Activated CD8-positive, alpha-beta memory T cell treated with anti-CD3 and anti-CD28 coated beads, Interleukin-2, amount 10 ng/mL, durations not matched to agents 7 days and 5 days (primary cell): ENCODE measurements at regions of chr14 and their contacts with region 1.

Region 1: DNA sequence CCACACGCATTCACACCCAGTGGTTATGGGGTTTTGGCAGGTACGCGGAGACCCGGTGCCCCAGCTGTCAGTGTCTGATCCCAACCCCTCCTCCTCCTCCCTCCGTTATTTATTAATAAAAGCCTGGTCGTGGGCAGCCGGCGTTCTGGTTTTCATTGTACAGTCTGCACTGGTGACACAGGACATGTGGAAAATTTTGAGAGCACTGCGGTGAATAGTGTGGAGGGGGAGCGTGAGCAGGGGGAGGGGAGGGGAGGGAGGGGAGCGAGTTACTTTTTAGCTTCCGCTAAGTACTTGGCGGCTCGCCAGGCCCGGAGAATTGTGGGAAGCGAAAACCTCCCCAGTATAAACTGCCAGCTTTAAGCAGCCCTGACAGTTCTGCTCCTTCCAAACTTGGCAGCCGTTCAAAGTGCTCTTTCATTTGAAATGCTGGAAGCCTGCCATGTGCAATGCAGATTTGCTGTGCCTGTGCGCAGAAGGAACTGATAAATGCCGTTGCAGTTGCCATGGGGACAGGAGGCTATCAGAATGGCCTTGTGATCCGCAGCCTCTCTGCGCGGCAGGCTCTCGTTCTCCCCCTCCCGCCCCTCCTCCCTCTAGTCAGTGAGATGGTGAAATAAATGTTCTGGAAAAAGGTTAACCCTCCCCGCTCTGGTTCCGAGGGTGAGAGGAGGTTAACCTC is 11.7 kb upstream of the IRF2BPL start:
- DNase-seq: peak; percentile 94
- ATAC-seq: peak; percentile 74
- H3K4me3 Mint-ChIP-seq: peak overlapping the region; percentile 67
- H3K27ac Mint-ChIP-seq: peak overlapping the region; percentile 97
- H3K4me1 Mint-ChIP-seq: peaks cover 88% of the 10 kb centered on the region
- H3K27me3 Mint-ChIP-seq: no peaks in the 10 kb centered on the region

Region 2: DNA sequence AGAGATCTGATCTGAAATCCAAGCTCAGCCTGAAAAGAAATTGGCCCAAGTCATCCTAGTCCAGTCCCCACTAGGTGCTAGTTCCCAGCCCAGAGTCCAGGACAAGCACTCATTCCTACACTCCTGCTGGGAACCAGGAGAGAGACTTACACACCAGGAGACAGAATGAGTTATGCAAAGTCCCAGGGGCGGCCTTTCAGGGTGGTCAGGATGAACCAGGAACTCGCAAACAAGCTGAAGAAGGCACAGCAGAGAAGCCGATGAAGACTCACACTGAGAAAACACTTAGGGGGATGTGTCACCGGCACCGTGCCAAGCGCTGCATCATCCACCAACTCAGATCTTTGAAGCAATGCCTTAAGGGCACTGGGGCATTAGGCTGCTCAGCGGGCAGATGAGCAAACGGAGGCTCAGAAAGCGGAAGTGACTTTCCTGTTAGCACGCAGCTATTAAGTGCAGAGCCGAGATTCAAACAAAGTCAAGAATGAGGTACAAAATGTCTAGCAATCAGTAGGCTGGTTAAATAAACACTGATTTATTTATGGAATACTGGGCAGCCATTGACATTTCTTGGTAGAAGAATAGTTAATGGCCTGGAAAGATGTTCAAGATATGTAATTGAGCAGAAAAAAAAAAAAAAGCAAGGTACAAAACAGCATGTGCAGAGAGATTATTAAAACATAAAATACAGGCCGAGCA is 135.3 kb before region 1 on chr14:
- CTCF ChIA-PET with region 1: interaction called, 81 read pairs
- DNase-seq: peak; percentile 78
- ATAC-seq: peak; percentile 75
- H3K4me3 Mint-ChIP-seq: no peak overlapping the region
- H3K27ac Mint-ChIP-seq: no peak overlapping the region
- H3K4me1 Mint-ChIP-seq: peaks cover 29% of the 10 kb centered on the region
- H3K27me3 Mint-ChIP-seq: peaks cover 7% of the 10 kb centered on the region

Region 3: DNA sequence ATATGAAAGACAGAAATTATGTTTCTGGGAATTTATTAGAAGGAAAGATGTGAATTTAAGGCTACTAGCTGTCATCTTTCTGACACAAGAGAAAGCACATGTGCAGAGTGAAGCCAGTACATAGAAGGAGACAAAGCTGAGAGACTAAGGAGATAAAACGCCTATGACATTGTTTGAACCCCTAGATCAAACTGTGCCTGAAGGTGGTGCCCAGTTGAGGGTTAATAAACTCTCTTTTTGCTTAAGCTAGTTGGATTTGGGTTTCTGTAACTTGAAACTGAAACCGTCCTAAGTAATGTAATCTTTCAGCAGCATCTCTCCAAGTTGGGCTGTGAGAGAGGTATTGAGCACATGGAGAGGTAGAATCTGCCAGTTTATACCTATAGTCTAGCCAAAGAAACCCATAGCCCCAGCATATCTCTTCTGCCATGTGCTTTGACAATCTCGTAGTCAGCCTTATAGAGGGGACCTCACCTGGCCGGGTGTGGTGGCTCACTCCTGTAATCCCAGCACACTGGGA is 129.8 kb before region 1 on chr14:
- CTCF ChIA-PET with region 1: interaction called, 81 read pairs
- DNase-seq: no peak
- ATAC-seq: no peak
- H3K4me3 Mint-ChIP-seq: no peak overlapping the region
- H3K27ac Mint-ChIP-seq: no peak overlapping the region
- H3K4me1 Mint-ChIP-seq: peaks cover 49% of the 10 kb centered on the region
- H3K27me3 Mint-ChIP-seq: no peaks in the 10 kb centered on the region

Region 4: DNA sequence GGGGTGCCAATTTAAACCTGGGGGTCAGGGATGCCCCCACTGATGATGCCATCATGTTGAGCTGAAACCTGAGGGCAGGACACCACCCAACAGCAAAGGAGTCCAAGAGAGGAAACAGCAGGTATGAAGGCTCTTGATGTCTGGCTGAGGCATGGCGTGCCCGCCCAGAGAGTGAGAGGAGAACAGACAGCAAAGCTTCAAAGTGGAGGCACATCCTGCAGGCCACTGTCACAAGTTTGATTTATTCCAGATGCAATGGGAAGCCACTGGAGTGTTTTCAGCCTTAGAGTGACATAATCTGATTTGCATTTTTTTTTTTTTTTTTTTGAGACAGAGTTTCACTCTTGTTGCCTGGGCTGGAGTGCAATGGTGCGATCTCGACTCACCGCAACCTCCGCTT is 46.4 kb before region 1 on chr14:
- CTCF ChIA-PET with region 1: no interaction called
- DNase-seq: no peak
- ATAC-seq: no peak
- H3K4me3 Mint-ChIP-seq: no peak overlapping the region
- H3K27ac Mint-ChIP-seq: no peak overlapping the region
- H3K4me1 Mint-ChIP-seq: peaks cover 2% of the 10 kb centered on the region
- H3K27me3 Mint-ChIP-seq: peaks cover 7% of the 10 kb centered on the region

Region 5: GRCh38 chr14:77028384-77029231 is 11.6 kb before region 1 on chr14 and contains the start of gene IRF2BPL:
- CTCF ChIA-PET with region 1: interaction called, 26 read pairs
- DNase-seq: peak; percentile 97
- ATAC-seq: peak; percentile 78
- H3K4me3 Mint-ChIP-seq: peak within 1 kb of the TSS; percentile 89
- H3K27ac Mint-ChIP-seq: peak within 1 kb of the TSS; percentile 93
- H3K4me1 Mint-ChIP-seq: peaks cover 57% of the 10 kb centered on the region
- H3K27me3 Mint-ChIP-seq: no peaks in the 10 kb centered on the region
- total RNA-seq, gene IRF2BPL: 19.7 to 24.9 TPM